ENCODE measurements at regions of chr13 and their contacts with region 1.

Region 1: GRCh38 chr13:21476893-21477472 is 17.9 kb upstream of the ZDHHC20 start:
- DNase-seq: peak; percentile 88
- H3K4me3 Mint-ChIP-seq: peak overlapping the region; percentile 77
- H3K27ac Mint-ChIP-seq: peak overlapping the region; percentile 86
- H3K4me1 Mint-ChIP-seq: peaks cover 11% of the 10 kb centered on the region
- H3K27me3 Mint-ChIP-seq: no peaks in the 10 kb centered on the region
- CTCF ChIP-seq: peak; percentile 85

Region 2: GRCh38 chr13:21111546-21111945 is 365.4 kb before region 1 on chr13:
- CTCF ChIA-PET with region 1: no interaction called
- intact Hi-C with region 1: loop called (anchors 5 kb)
- DNase-seq: no peak
- H3K4me3 Mint-ChIP-seq: no peak overlapping the region
- H3K27ac Mint-ChIP-seq: no peak overlapping the region
- H3K4me1 Mint-ChIP-seq: no peaks in the 10 kb centered on the region
- H3K27me3 Mint-ChIP-seq: no peaks in the 10 kb centered on the region
- CTCF ChIP-seq: no peak

Region 3: DNA sequence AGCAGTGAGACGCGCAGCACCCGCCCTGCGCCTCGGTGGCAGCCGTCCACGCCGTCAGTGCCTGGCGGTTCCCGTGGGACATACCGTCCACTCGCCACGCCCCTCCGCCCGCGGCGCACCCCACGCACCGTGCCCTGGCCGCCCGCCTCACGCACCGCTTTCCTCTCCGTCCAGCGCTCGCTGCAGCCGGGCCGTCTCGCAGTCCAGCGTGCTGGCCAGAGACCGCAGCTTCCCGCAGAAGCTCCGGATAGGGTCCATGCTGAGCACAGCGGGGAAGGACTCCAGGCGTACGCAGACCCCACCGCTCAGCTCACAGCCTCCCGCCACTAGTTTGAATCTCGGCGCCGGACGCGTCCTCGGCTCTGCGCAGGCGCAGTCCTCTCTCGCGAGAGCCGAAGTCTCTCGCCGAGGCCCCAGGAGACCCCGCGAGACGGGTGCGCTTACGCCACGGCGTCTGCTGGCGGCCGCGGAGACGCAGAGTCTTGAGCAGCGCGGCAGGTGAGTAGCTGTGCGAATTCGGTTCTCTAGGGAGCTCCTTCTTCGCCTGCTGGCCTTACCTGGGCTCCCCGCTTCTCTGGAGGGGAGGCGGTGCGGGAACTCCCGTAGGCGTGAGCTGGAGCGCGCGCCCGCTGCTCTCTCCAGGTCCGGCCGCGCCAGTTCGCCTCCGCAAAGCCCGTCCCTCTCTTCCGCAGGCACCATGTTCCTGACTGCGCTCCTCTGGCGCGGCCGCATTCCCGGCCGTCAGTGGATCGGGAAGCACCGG is 300.6 kb before region 1 on chr13 and contains the starts of genes MRPL57 and SKA3:
- CTCF ChIA-PET with region 1: no interaction called
- intact Hi-C with region 1: loop called (anchors 5 kb)
- DNase-seq: peak; percentile 91
- H3K4me3 Mint-ChIP-seq: peak within 1 kb of the TSS; percentile 98
- H3K27ac Mint-ChIP-seq: peak within 1 kb of the TSS; percentile 81
- H3K4me1 Mint-ChIP-seq: no peaks in the 10 kb centered on the region
- H3K27me3 Mint-ChIP-seq: no peaks in the 10 kb centered on the region
- CTCF ChIP-seq: no peak
- total RNA-seq, gene MRPL57: 15.1 and 15.2 TPM in 2 replicates
- total RNA-seq, gene SKA3: 17.5 and 25.9 TPM in 2 replicates

Region 4: GRCh38 chr13:21297914-21298831 is 178.8 kb before region 1 on chr13:
- CTCF ChIA-PET with region 1: interaction called, 11 read pairs
- intact Hi-C with region 1: loop called (anchors 1 kb)
- DNase-seq: peak; percentile 85
- H3K4me3 Mint-ChIP-seq: peak overlapping the region; percentile 92
- H3K27ac Mint-ChIP-seq: peak overlapping the region; percentile 39
- H3K4me1 Mint-ChIP-seq: no peaks in the 10 kb centered on the region
- H3K27me3 Mint-ChIP-seq: no peaks in the 10 kb centered on the region
- CTCF ChIP-seq: peak; percentile 73

Region 5: DNA sequence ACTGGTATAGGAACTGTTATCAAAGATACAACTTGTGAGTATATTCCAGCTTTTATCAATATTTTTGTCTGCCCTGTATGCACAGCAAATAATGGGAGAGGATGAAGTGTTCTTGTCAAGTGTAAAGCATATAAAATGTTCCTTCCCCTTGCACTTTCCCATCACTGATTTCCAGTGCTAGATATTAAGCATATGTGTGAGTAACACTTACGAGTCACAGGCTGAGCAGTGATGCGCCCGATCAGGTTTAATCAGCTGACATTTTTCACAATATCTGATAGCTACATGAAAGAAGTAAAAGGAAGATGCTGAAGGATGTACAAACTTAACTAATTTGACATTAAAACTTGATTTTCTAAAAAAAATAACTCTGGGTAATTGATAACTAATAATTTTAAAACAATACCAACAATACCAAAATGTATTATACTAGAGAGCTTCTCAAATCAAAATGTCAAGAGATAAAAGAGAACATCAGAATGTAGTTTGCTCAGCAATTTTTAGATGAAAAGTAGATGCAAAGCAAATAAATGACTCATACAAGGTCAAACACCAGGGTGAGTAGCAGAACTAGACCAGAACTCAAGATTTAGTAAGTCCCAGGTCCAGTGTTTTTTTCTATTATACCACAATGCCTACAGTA is 74.3 kb before region 1 on chr13:
- CTCF ChIA-PET with region 1: interaction called, 5 read pairs
- intact Hi-C with region 1: loop called (anchors 5 kb)
- DNase-seq: no peak
- H3K4me3 Mint-ChIP-seq: no peak overlapping the region
- H3K27ac Mint-ChIP-seq: no peak overlapping the region
- H3K4me1 Mint-ChIP-seq: no peaks in the 10 kb centered on the region
- H3K27me3 Mint-ChIP-seq: no peaks in the 10 kb centered on the region
- CTCF ChIP-seq: no peak